Activated T-helper 2 cell treated with anti-CD3 and anti-CD28 coated beads, Interferon-gamma antibody, Interleukin-2, Interleukin-4, amounts not matched to agents 10 μg/mL and 5 μg/mL and 100 μg/mL, durations not matched to agents 14 hours and 24 hours and 36 hours (primary cell): ENCODE measurements at regions of chr9 and their contacts with region 1.

Region 1: DNA sequence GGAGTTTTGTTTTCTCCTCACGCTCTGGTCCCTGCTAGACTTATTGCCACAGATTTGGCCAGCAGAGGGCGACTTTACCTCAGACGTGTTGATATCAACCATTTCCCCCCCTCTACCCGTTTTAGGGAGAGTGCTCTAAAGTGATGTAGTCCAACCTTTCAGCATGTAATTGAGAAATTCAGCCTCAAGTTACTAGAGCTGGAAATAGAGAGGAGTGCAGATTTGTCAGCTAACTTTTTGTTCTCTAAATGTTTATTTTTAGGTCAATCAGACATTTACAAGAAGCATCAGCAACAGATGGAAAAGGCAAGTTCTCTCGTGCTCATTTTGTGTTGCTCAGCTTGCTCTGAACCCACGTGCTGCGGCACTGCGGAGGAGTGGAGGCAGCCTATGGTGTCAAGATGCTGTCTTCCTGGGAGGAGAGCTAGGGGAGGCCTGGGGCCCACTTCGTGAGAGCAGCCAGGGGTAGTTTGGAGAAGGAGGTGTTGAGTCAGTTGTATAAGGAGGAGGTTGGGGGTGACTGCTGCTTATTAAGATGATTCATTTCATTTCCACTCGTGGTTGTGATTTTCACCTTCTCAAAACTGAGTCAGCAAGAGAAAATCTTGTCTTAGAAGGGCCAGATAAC is 53.6 kb downstream of the GPR107 start:
- DNase-seq: peak; percentile 63
- H3K4me3 Mint-ChIP-seq: no peak overlapping the region
- H3K27ac Mint-ChIP-seq: peak overlapping the region; percentile 72
- H3K4me1 Mint-ChIP-seq: peaks cover 32% of the 10 kb centered on the region
- H3K27me3 Mint-ChIP-seq: no peaks in the 10 kb centered on the region

Region 2: GRCh38 chr9:130042406-130042832 is 64.9 kb before region 1 on chr9:
- intact Hi-C with region 1: no loop called
- DNase-seq: no peak
- H3K4me3 Mint-ChIP-seq: peak overlapping the region; percentile 97
- H3K27ac Mint-ChIP-seq: peak overlapping the region; percentile 96
- H3K4me1 Mint-ChIP-seq: peaks cover 43% of the 10 kb centered on the region
- H3K27me3 Mint-ChIP-seq: no peaks in the 10 kb centered on the region

Region 3: DNA sequence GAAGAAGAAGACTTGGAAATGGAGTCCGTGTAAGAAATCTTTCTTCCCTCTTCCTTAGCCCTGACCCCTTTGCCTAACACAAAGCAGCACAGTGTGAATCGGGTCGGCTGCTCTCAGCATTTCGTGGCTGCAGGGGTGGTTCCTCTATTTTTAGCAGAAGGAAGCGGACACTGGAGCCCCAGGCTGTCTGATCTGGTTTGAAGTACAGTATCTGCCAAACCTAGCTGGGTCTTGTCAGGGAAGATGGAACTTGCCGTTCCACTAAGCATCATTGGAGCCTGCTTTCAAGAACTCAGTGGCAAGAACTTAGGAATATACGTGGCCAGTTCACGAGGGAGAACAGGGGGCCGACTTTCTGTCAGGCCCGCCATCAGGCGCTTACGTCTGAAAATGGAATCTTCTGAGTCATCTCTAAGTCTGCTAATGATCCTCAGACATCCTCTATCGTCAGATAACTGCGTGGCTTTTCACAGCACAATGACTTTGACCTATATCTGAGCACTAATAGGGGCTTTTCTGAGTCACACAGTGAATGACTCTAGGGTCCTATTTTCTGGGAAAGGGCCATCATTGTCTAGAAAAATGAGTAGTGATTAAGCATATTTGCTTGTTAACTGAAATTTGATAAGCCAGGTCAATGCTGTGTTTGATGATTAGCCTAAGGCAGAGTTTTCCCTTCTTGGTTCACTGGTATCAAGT is 21.5 kb after region 1 on chr9:
- intact Hi-C with region 1: loop called (anchors 1 kb)
- DNase-seq: peak; percentile 38
- H3K4me3 Mint-ChIP-seq: peak overlapping the region; percentile 82
- H3K27ac Mint-ChIP-seq: peak overlapping the region; percentile 100
- H3K4me1 Mint-ChIP-seq: peaks cover 43% of the 10 kb centered on the region
- H3K27me3 Mint-ChIP-seq: no peaks in the 10 kb centered on the region

Region 4: GRCh38 chr9:130167927-130168326 is 60.6 kb after region 1 on chr9:
- intact Hi-C with region 1: loop called (anchors 10 kb)
- DNase-seq: no peak
- H3K4me3 Mint-ChIP-seq: no peak overlapping the region
- H3K27ac Mint-ChIP-seq: no peak overlapping the region
- H3K4me1 Mint-ChIP-seq: peaks cover 7% of the 10 kb centered on the region
- H3K27me3 Mint-ChIP-seq: peaks cover 24% of the 10 kb centered on the region

Region 5: DNA sequence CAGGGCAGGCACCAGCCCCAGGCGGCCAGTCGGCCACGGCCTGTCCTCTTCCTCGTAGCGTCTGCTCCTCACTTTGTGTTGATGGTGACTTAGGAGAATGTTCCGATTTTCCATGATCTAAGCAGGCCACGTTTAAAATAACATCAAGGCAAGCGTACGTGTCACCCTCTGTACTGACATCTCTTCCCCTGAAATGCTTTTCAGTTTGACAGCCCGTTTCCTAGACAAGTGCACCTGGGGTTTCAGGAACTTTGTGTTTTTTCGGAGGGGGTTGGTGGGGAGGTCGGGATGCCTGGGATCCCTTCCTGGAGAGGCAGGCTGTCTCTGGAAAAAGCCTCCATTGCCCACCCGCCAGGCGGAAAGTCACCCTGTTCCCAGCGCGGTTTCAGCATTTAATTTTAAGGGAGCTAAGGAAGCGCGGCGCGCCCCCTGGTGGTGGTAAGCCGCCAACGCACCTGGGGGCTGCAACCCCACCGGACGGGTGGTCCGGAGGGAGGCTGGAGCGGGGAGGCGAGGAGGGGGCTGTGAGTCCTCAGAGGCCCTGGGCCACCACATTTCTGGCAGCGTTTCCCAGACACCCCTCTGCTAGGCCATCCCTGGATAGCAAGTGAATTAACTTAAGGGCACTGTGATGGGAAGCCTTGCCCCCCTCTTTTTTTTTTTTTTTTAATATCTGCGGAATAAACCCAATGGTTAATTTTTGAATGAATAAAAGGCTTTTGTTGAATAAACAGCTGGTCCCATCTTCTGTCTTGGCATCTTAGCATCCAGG is 128.7 kb after region 1 on chr9:
- intact Hi-C with region 1: loop called (anchors 1 kb)
- DNase-seq: peak; percentile 49
- H3K4me3 Mint-ChIP-seq: no peak overlapping the region
- H3K27ac Mint-ChIP-seq: no peak overlapping the region
- H3K4me1 Mint-ChIP-seq: peaks cover 22% of the 10 kb centered on the region
- H3K27me3 Mint-ChIP-seq: peaks cover 2% of the 10 kb centered on the region

Region 6: DNA sequence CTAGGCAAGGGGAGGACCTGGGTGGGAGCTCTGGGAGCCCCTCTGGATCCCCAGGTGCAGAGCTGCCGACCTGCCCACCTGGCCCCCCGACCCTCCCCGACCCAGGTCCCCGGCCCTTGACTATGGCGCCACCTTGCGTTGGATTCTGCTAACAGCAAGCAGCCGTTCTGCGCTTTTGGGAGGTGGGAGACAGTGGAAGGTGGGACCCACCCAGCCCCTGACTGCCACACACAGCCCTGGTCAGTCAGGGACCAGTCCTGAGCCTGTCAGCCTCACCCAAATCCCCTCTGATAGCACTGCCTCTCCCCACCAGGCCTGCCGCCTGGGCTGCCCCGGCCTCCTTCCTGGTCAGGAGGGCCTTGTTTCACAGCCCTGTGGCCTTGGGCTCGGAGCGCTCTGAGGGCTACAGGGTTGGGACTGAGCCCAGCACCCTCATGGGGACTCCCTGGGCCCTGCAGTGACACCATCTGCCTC is 236.1 kb after region 1 on chr9:
- intact Hi-C with region 1: loop called (anchors 2 kb)
- DNase-seq: no peak
- H3K4me3 Mint-ChIP-seq: no peak overlapping the region
- H3K27ac Mint-ChIP-seq: no peak overlapping the region
- H3K4me1 Mint-ChIP-seq: no peaks in the 10 kb centered on the region
- H3K27me3 Mint-ChIP-seq: no peaks in the 10 kb centered on the region